ENCODE measurements at regions of chr9 and their contacts with region 1.

Region 1: GRCh38 chr9:6449645-6450044 is 36.6 kb downstream of the UHRF2 start:
- DNase-seq: no peak
- ATAC-seq: no peak
- H3K4me3 Mint-ChIP-seq: no peak overlapping the region
- H3K27ac Mint-ChIP-seq: peak overlapping the region; percentile 28
- H3K4me1 Mint-ChIP-seq: peaks cover 74% of the 10 kb centered on the region
- H3K27me3 Mint-ChIP-seq: no peaks in the 10 kb centered on the region
- CTCF ChIP-seq: no peak

Region 2: GRCh38 chr9:6428940-6429889 is 20.4 kb before region 1 on chr9:
- CTCF ChIA-PET with region 1: no interaction called
- POLR2A ChIA-PET with region 1: interaction called, 7 read pairs
- intact Hi-C with region 1: loop called (anchors 2 kb)
- DNase-seq: no peak
- ATAC-seq: peak; percentile 81
- H3K4me3 Mint-ChIP-seq: peak overlapping the region; percentile 64
- H3K27ac Mint-ChIP-seq: peak overlapping the region; percentile 73
- H3K4me1 Mint-ChIP-seq: peaks cover 80% of the 10 kb centered on the region
- H3K27me3 Mint-ChIP-seq: no peaks in the 10 kb centered on the region
- CTCF ChIP-seq: no peak

Region 3: GRCh38 chr9:6467006-6467625 is 17.5 kb after region 1 on chr9:
- CTCF ChIA-PET with region 1: no interaction called
- POLR2A ChIA-PET with region 1: no interaction called
- intact Hi-C with region 1: loop called (anchors 2 kb)
- DNase-seq: no peak
- ATAC-seq: no peak
- H3K4me3 Mint-ChIP-seq: no peak overlapping the region
- H3K27ac Mint-ChIP-seq: no peak overlapping the region
- H3K4me1 Mint-ChIP-seq: peaks cover 4% of the 10 kb centered on the region
- H3K27me3 Mint-ChIP-seq: no peaks in the 10 kb centered on the region
- CTCF ChIP-seq: no peak

Measured in activated B cell treated with CpG ODN at 0.5 μM for 24 hours (primary cell).